ENCODE measurements at regions of chr5 and their contacts with region 1.

Region 1: DNA sequence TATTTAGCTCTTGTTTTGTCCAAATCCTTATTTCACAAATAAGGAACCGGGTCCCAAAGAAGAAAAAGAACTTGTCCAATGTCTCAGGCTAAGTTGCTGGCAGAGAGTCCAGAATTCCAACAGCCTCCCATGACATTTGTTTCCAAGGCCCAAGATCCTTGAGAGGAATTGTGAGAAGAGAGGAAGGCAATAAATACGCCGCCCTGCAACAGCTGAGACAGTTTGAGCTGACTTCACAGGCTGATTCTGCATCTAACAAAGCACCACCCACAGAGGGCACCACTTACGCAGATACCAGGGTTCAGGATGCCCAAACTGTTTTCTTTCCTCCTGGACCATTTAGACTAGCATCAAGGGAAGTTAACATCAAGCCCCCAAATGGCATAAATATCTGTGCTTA is 211.3 kb downstream of the FAM114A2 start:
- DNase-seq: no peak
- H3K4me3 ChIP-seq: no peak overlapping the region
- H3K27ac ChIP-seq: no peak overlapping the region
- H3K4me1 ChIP-seq: no peaks in the 10 kb centered on the region
- H3K27me3 ChIP-seq: no peaks in the 10 kb centered on the region
- CTCF ChIP-seq: peak in 1 of 3 experiments; percentile 6

Region 2: DNA sequence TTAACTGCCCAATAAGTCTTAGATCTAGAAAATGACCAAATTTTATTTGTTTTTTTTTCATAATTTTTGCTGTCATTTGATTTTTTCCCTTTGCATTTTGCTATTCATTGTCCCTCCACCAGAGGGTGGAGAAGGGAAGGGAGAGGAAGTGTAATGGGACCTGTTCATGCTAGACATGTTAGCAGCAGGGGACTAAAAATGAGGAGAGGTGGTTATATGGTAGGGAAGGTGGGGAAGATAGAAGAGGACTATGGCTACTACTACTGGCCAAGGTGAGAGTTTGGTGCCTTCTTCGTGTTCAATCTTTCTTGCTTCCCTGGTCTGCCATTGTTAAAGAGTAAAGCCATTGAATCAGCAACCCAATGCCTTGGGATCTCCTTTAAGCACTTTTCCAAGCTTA is 330.6 kb before region 1 on chr5:
- intact Hi-C with region 1: loop called (anchors 10 kb)
- DNase-seq: no peak
- H3K4me3 ChIP-seq: no peak overlapping the region
- H3K27ac ChIP-seq: no peak overlapping the region
- H3K4me1 ChIP-seq: peaks cover 0 to 15% of the 10 kb centered on the region in 2 donors
- H3K27me3 ChIP-seq: no peaks in the 10 kb centered on the region
- CTCF ChIP-seq: peak; percentile 49 to 75 (median 52)

Measured in ascending aorta (tissue), 2 donors.